ENCODE measurements at regions of chr18 and their contacts with region 1.

Region 1: DNA sequence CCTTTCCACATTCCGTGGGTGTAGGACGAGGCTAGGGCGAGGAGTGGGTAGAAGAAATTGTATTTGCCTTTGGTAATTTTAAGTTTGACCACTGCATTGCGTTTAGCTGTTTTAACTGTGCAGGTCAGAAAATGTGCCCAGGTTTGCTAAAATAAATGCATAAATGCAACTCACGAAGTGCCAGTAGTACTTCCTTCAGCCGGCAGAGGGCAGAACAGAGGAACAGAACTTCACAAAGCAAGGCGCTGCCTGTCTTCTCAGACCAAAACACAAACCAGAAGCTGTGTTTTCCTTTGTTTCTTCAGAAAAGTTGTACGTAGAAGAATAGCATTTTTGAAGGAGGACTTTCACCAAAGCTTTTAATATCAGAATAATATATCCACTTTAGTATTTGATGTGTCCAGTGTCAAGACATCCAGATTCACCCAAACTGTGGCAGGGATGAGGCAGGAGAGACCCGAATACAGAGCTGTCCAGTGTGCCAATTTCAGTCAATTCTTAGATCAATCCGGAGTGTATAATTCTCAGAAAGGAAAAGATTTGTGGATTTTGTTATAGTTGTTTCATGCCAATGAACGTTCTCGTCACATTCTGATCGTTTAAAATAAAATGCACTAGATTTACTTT is 348.6 kb downstream of the DLGAP1 start:
- DNase-seq: peak; percentile 58
- H3K4me3 ChIP-seq: peak overlapping the region in 1 of 4 donors; percentile 1
- H3K27ac ChIP-seq: no peak overlapping the region
- H3K4me1 ChIP-seq: no peaks in the 10 kb centered on the region
- H3K27me3 ChIP-seq: no peaks in the 10 kb centered on the region
- CTCF ChIP-seq: peak; percentile 63 to 85 (median 76)
- EP300 ChIP-seq: no peak
- POLR2A ChIP-seq: no peak

Region 2: DNA sequence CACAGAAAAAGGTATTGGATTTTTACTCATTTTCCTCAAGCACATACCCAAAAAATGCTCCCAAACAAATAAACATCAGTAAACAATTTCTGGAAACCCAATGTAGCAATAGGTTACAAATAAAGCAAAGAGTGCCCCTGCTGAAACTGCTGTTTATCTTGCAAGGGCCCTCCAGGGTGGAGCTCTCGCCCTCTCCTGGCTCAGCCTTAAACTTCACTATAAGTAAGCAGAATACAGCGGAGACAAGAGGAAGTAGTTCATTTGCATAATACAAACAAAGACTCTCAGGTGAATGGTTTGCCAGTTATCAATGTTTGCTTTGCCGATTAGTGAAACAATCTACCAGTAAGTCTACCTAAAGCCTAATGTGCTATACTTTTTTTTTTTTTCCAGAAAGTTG is 89.0 kb before region 1 on chr18:
- in situ Hi-C with region 1: no loop called
- intact Hi-C with region 1: no loop called
- DNase-seq: no peak
- H3K4me3 ChIP-seq: no peak overlapping the region
- H3K27ac ChIP-seq: no peak overlapping the region
- H3K4me1 ChIP-seq: no peaks in the 10 kb centered on the region
- H3K27me3 ChIP-seq: no peaks in the 10 kb centered on the region
- CTCF ChIP-seq: no peak
- EP300 ChIP-seq: no peak
- POLR2A ChIP-seq: no peak

Region 3: GRCh38 chr18:4172196-4173100 is 65.9 kb after region 1 on chr18:
- in situ Hi-C with region 1: no loop called
- intact Hi-C with region 1: no loop called
- DNase-seq: no peak
- H3K4me3 ChIP-seq: no peak overlapping the region
- H3K27ac ChIP-seq: no peak overlapping the region
- H3K4me1 ChIP-seq: no peaks in the 10 kb centered on the region
- H3K27me3 ChIP-seq: no peaks in the 10 kb centered on the region
- CTCF ChIP-seq: no peak
- EP300 ChIP-seq: no peak
- POLR2A ChIP-seq: no peak

Region 4: DNA sequence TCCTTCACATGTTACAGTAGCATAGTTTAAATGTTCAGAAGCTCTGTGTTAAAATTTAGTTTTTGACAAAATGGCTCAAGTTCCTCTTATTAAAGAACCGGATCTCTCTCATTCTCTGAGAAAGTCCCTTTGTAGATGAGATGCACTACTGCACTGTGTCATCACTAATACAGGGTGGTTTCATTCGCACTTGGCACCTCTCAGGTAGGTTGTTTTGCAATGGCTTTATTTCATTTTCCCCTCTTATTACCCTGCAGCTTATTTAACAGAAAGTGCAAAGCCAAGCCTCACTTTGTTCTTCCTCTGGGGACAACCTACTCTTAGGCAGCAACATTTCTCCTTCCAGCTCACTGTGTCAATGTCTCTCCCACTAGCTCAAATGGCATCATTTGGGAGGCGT is 163.5 kb after region 1 on chr18:
- in situ Hi-C with region 1: no loop called
- intact Hi-C with region 1: no loop called
- DNase-seq: no peak
- H3K4me3 ChIP-seq: no peak overlapping the region
- H3K27ac ChIP-seq: no peak overlapping the region
- H3K4me1 ChIP-seq: no peaks in the 10 kb centered on the region
- H3K27me3 ChIP-seq: no peaks in the 10 kb centered on the region
- CTCF ChIP-seq: no peak
- EP300 ChIP-seq: no peak
- POLR2A ChIP-seq: no peak

Region 5: GRCh38 chr18:5057386-5058348 is 951.1 kb after region 1 on chr18:
- in situ Hi-C with region 1: loop called (anchors 10 to 25 kb)
- intact Hi-C with region 1: no loop called
- DNase-seq: peak; percentile 52
- H3K4me3 ChIP-seq: no peak overlapping the region
- H3K27ac ChIP-seq: no peak overlapping the region
- H3K4me1 ChIP-seq: no peaks in the 10 kb centered on the region
- H3K27me3 ChIP-seq: no peaks in the 10 kb centered on the region
- CTCF ChIP-seq: peak; percentile 58 to 77 (median 70)
- EP300 ChIP-seq: no peak
- POLR2A ChIP-seq: no peak